ENCODE measurements at regions of chr1 and their contacts with region 1.

Region 1: GRCh38 chr1:10217748-10218441 is 7.5 kb downstream of the KIF1B start:
- DNase-seq: no peak
- ATAC-seq: peak in 2 of 4 donors; percentile 26 to 52
- H3K4me3 ChIP-seq: peak overlapping the region; percentile 50
- H3K27ac ChIP-seq: peak overlapping the region; percentile 99
- H3K4me1 ChIP-seq: peaks cover 76% of the 10 kb centered on the region
- H3K27me3 ChIP-seq: no peaks in the 10 kb centered on the region
- CTCF ChIP-seq: no peak

Region 2: DNA sequence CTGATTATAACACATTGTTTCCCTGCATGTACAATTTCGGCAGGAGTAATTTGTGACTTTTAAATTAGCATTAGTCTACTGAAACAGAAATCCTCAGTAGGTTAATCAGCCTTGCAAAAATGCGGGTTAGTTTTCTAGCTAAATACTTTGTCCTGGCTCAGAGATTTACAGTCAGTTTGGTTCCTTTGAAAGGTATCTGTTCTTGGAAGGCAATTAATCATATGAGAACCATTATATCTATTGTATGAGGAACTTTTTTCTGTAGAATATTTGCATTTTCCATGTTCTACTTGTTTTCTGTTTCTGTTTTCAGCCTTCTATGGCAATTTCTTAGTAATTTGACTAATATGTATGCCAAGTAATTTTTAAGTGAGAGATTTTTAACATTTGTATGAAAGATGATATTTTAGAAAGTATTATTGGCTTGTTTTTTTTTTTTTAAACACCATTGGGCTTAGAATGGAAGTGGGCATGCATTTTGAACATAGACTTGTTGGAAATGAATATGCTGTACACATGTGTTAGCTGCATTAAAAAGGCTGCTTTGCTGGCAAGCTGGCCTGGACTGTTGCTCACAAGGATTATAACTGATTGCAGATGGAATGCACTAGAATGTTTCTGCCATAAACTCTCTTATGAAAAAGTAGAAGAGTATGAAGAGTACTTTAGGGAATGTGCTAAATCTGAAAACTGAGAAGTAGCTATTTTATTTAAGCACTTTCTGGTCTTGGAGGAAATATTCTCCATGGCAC is 18.7 kb after region 1 on chr1:
- intact Hi-C with region 1: loop called in 1 of 2 experiments (anchors 2 kb)
- DNase-seq: no peak
- ATAC-seq: no peak
- H3K4me3 ChIP-seq: no peak overlapping the region
- H3K27ac ChIP-seq: peak overlapping the region; percentile 31
- H3K4me1 ChIP-seq: peaks cover 51% of the 10 kb centered on the region
- H3K27me3 ChIP-seq: no peaks in the 10 kb centered on the region
- CTCF ChIP-seq: no peak

Region 3: DNA sequence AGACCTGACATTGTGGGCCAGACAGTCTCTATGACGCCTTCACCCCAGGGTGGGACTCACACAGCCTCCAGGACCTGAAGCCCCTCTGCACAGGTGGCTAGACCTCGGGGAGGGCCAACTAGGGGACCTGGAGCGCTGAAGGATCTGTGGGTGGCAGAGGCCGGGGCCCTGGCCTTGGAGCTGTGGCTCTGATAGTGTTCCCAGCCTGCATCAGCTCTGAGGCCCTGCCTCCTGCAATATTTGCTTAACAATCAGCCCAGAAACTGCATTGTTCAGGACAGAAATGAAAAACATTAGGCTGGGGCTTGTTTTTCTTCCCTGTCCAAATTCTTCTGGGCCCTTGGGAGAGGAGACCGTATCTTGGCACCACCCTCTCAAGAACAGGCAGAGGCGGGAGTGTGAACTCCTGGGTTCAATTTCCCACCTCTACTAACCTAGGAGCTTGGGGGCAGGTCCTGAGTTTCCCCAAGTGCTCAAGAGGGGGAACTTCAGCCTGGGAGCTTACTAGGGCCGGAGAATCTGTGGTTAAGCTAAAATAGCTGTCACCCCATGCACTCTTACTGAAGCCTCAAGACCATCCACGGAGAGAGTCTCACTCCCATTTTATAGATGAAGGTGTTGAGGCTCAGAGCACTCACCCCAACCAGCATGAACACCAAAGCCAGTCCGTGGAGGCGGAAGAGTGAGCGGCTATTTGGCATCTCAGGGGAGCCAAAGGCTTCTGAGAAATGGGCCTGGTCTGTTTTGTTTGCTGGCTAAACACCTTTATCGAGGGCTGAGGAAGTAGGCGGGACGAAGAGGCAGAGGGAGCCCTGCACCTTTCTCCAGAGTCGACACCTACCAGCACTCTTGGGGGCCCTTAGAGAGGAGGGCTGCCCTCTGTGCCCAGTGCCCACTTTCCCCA is 597.3 kb after region 1 on chr1:
- intact Hi-C with region 1: no loop called
- DNase-seq: peak in 1 of 2 donors; percentile 21
- ATAC-seq: no peak
- H3K4me3 ChIP-seq: no peak overlapping the region
- H3K27ac ChIP-seq: no peak overlapping the region
- H3K4me1 ChIP-seq: no peaks in the 10 kb centered on the region
- H3K27me3 ChIP-seq: no peaks in the 10 kb centered on the region
- CTCF ChIP-seq: no peak

Measured in psoas muscle (tissue), 8 donors.